GM10248 (cell line): ENCODE measurements at regions of chr12 and their contacts with region 1.

Region 1: GRCh38 chr12:56117778-56118687 is at the start of gene ZC3H10:
- DNase-seq: peak; percentile 93
- CTCF ChIP-seq: peak; percentile 62

Region 2: DNA sequence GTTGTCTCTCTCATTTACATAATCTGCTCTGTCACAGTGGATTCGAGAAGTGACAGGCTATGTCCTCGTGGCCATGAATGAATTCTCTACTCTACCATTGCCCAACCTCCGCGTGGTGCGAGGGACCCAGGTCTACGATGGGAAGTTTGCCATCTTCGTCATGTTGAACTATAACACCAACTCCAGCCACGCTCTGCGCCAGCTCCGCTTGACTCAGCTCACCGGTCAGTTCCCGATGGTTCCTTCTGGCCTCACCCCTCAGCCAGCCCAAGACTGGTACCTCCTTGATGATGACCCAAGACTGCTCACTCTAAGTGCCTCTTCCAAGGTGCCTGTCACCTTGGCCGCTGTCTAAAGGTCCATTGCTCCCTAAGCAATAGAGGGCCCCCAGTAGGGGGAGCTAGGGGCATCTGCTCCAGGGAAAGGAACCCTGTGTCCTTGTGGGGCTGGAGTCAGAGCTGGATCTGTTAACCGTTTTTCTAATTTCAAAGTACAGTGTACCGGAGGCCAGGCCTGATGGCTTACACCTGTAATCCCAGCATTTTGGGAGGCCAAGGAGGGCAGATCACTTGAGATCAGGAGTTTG is 33.0 kb before region 1 on chr12:
- CTCF ChIA-PET with region 1: no interaction called
- POLR2A ChIA-PET with region 1: no interaction called
- DNase-seq: no peak
- CTCF ChIP-seq: peak; percentile 25

Region 3: DNA sequence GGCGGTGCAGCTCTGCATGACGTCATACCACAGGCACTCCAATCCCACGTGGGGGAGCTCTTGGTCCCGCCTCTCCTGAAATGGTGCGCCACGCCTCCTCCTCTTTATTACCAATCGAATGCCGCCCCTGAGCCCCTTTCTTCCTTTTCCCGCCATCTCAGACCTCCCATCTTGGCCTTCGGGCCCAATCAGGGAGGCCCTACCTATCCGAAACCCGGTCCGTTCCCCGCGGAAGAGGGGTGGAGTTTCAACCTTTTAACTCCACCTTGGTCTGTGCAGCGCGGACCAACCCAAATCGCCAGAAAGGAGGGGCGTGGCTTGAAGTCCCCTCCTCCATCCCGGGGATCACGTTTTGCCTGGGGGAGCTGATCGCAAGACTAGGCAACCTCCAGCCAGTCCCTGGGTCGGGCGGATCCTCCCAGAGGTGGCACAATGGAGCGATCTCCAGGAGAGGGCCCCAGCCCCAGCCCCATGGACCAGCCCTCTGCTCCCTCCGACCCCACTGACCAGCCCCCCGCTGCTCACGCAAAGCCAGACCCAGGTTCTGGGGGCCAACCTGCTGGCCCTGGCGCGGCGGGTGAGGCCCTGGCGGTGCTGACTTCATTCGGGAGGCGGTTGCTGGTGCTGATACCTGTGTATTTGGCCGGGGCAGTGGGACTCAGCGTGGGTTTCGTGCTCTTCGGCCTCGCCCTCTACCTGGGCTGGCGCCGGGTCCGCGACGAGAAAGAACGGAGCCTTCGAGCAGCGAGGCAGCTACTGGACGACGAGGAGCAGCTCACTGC is 10.0 kb after region 1 on chr12 and contains the start of gene ESYT1:
- CTCF ChIA-PET with region 1: interaction called, 50 read pairs
- POLR2A ChIA-PET with region 1: interaction called, 49 read pairs
- DNase-seq: peak; percentile 97
- CTCF ChIP-seq: no peak

Region 4: GRCh38 chr12:56299853-56300643 is 182.0 kb after region 1 on chr12 and contains the start of gene CS:
- CTCF ChIA-PET with region 1: no interaction called
- POLR2A ChIA-PET with region 1: no interaction called
- DNase-seq: peak; percentile 98
- CTCF ChIP-seq: no peak